ENCODE measurements at regions of chr3 and their contacts with region 1.

Region 1: DNA sequence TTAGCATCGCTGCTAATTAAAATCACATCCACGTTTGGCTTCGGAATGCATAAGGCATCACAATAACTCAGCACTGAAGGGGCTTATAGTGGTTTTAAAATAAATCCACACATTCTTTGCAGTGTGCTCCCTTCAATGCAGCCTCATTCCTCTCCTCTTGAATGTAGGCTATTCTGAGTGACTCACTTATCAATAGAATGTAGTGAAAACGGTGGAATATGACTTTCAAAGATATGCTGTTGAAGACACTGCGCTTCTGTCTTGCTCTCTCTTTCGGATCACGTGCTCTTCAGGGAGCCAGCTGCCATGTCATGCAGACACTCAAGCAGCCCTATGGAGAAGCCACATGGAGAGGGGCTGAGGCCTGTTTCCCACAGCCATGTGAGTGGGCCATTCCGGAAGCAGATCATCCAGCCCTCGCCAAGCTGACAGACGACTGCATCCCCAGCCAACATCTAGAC is 87.4 kb downstream of the CRYGS start:
- DNase-seq: no peak
- ATAC-seq: no peak
- H3K4me3 ChIP-seq: no peak overlapping the region
- H3K27ac ChIP-seq: no peak overlapping the region
- H3K4me1 ChIP-seq: no peaks in the 10 kb centered on the region
- H3K27me3 ChIP-seq: peaks cover 0 to 2% of the 10 kb centered on the region in 2 experiments; a peak in 1 of 4 replicates
- CTCF ChIP-seq: no peak
- EP300 ChIP-seq: no peak
- POLR2A ChIP-seq: no peak
- RAD21 ChIP-seq: no peak

Region 2: GRCh38 chr3:186509423-186509822 is 52.7 kb after region 1 on chr3:
- CTCF ChIA-PET with region 1: interaction called, 3 read pairs
- POLR2A ChIA-PET with region 1: no interaction called
- RAD21 ChIA-PET with region 1: interaction called, 3 read pairs
- SMC1A ChIA-PET with region 1: no interaction called
- in situ Hi-C with region 1: no loop called
- intact Hi-C with region 1: loop called (anchors 5 kb)
- DNase-seq: no peak
- ATAC-seq: no peak
- H3K4me3 ChIP-seq: no peak overlapping the region
- H3K27ac ChIP-seq: no peak overlapping the region
- H3K4me1 ChIP-seq: peaks cover 40% of the 10 kb centered on the region
- H3K27me3 ChIP-seq: no peaks in the 10 kb centered on the region
- CTCF ChIP-seq: no peak
- EP300 ChIP-seq: no peak
- POLR2A ChIP-seq: no peak
- RAD21 ChIP-seq: no peak

Measured in GM12878 (cell line).